Thyroid gland (tissue), 4 donors: ENCODE measurements at regions of chr11 and their contacts with region 1.

Region 1: DNA sequence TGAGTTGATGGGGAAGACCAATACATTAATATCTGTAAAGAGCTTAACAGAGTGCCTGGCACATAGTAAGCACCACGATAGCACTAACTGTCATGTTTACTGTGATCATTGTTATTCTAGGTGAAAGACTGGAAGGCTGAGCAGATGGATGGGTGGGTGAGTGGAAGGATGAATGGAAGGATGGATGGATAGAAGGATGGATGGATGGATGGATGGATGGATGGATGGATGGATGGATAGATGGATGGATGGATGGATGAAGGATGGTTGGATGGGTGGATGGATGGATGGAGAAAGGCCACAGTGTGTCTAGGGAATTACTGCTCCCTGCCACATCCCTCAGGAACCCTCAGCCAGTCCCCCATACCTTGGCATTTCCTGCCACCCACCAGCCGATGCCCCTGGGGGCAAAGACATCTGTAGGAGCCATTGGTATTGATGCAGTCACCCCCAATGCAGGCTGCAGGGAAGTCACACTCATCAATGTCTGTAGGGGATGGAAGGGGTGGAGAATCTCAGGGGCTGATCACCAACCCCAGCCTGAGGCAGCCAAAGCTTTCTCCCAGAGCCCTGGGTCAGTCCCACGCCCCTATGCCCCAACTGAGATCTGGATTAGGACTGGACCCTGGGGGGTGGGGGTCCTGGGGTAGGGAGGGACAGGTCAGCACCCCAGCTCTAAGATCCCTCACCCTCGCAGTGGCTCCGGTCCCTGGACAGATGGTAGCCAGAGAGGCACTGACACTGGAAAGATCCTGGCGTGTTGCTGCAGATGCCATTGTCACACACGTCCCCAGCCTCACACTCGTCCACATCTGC is 15.2 kb downstream of the LTBP3 start:
- DNase-seq: no peak
- H3K4me3 ChIP-seq: no peak overlapping the region
- H3K27ac ChIP-seq: no peak overlapping the region
- H3K4me1 ChIP-seq: peaks cover 18 to 30% of the 10 kb centered on the region in 2 donors
- H3K27me3 ChIP-seq: no peaks in the 10 kb centered on the region
- CTCF ChIP-seq: no peak
- POLR2A ChIP-seq: no peak

Region 2: DNA sequence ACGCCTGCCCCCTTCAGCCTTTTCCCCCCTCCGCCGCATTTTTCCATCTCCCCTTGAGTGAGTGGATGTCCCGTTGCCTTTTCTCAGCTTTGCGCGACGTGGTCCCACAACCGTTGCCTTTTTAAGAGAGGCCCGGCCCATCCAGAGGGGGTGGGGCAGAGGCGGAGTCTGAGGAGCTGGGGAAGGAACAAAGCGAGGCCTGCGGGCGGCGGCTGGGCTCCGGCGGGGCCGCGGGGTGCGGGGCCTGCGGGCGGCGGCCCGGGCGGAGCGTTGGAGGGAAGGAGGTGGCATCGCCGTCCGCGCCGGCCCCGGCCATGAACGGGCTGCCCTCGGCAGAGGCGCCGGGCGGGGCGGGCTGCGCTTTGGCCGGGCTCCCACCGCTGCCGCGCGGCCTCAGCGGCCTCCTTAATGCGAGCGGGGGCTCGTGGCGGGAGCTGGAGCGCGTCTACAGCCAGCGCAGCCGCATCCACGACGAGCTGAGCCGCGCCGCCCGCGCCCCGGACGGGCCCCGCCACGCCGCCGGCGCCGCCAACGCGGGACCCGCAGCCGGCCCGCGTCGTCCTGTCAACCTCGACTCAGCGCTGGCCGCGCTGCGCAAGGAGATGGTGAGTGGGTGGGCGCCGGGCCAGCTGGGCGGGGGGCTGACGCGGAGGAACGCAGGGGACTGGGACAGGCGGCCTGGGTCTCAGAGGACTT is 29.6 kb after region 1 on chr11 and contains the start of gene FAM89B:
- intact Hi-C with region 1: loop called (anchors 2 kb)
- DNase-seq: peak; percentile 92 to 94
- H3K4me3 ChIP-seq: peak within 1 kb of the TSS in 2 of 3 donors; percentile 31 to 62
- H3K27ac ChIP-seq: peak within 1 kb of the TSS in 1 of 3 donors; percentile 81
- H3K4me1 ChIP-seq: peaks cover 52 to 71% of the 10 kb centered on the region in 2 donors
- H3K27me3 ChIP-seq: no peaks in the 10 kb centered on the region
- CTCF ChIP-seq: peak in 1 of 6 experiments; percentile 1
- POLR2A ChIP-seq: peak in 1 of 2 donors; percentile 74
- total RNA-seq, gene FAM89B: 26.9 to 55.5 (median 43.2) TPM